Activated CD8-positive, alpha-beta T cell treated with anti-CD3 and anti-CD28 coated beads for 36 hours (primary cell): ENCODE measurements at regions of chr13 and their contacts with region 1.

Region 1: DNA sequence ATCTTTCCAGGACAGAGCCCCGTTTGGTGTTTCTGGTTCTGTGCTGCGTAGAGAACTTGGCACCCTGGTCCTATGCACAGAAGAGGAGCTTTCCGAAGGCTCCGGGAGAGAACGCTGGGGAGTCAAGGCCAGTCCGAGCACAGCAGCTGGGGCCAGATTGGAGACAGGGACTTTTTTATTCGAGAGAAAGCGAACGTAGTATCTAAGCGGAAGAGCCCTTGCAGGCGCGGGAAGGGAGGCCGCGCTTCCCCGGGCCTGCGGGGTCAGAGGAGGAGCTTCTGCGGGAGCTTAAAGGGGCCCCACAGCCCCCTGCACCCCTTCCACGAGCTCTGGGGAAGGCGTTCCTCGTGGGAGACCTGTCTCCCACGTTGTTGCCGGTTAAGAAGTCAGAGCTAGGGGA is 48.6 kb upstream of the ARHGEF7 start:
- DNase-seq: no peak
- ATAC-seq: no peak
- H3K4me3 Mint-ChIP-seq: peak overlapping the region; percentile 62
- H3K27ac Mint-ChIP-seq: no peak overlapping the region
- H3K4me1 Mint-ChIP-seq: peaks cover 3% of the 10 kb centered on the region
- H3K27me3 Mint-ChIP-seq: peaks cover 36% of the 10 kb centered on the region
- CTCF ChIP-seq: no peak

Region 2: DNA sequence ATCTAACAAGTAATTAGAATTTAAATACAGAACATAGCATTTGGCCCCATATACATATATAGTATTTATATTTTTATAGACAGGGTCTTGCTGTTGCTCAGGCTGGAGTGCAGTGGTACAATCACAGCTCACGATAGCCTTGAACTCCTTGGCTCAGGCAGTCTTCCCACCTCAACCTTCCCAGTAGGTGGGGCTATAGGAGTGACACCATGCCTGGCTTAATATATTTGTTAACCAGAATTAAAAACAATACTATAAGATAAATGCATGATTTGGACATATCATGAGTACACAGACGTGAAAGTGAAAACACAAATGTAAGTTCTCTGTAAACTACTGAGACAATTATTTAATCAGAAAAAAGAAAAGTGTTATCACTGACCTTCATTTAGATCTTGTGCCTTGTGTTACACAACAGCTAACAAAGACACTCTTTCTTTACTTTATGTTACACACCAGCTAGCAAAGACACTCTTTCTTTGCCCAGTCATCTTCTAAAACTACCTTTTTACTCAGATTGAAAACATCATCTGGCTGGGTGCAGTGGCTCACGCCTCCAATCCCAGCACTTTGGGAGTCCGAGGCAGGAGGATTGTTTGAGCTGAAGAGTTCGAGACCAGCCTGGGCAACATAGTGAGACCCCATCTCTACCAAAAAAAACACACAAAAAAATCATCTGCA is 383.2 kb before region 1 on chr13:
- CTCF ChIA-PET with region 1: no interaction called
- POLR2A ChIA-PET with region 1: no interaction called
- intact Hi-C with region 1: no loop called
- DNase-seq: no peak
- ATAC-seq: no peak
- H3K4me3 Mint-ChIP-seq: no peak overlapping the region
- H3K27ac Mint-ChIP-seq: no peak overlapping the region
- H3K4me1 Mint-ChIP-seq: peaks cover 6% of the 10 kb centered on the region
- H3K27me3 Mint-ChIP-seq: no peaks in the 10 kb centered on the region
- CTCF ChIP-seq: peak; percentile 13

Region 3: GRCh38 chr13:110705826-110706569 is 360.5 kb before region 1 on chr13 and contains the start of gene CARS2:
- CTCF ChIA-PET with region 1: no interaction called
- POLR2A ChIA-PET with region 1: no interaction called
- intact Hi-C with region 1: no loop called
- DNase-seq: peak; percentile 95
- ATAC-seq: peak; percentile 96
- H3K4me3 Mint-ChIP-seq: peak within 1 kb of the TSS; percentile 90
- H3K27ac Mint-ChIP-seq: peak within 1 kb of the TSS; percentile 90
- H3K4me1 Mint-ChIP-seq: peaks cover 30% of the 10 kb centered on the region
- H3K27me3 Mint-ChIP-seq: no peaks in the 10 kb centered on the region
- CTCF ChIP-seq: no peak
- total RNA-seq, gene CARS2: 60.7 to 63.0 TPM

Region 4: DNA sequence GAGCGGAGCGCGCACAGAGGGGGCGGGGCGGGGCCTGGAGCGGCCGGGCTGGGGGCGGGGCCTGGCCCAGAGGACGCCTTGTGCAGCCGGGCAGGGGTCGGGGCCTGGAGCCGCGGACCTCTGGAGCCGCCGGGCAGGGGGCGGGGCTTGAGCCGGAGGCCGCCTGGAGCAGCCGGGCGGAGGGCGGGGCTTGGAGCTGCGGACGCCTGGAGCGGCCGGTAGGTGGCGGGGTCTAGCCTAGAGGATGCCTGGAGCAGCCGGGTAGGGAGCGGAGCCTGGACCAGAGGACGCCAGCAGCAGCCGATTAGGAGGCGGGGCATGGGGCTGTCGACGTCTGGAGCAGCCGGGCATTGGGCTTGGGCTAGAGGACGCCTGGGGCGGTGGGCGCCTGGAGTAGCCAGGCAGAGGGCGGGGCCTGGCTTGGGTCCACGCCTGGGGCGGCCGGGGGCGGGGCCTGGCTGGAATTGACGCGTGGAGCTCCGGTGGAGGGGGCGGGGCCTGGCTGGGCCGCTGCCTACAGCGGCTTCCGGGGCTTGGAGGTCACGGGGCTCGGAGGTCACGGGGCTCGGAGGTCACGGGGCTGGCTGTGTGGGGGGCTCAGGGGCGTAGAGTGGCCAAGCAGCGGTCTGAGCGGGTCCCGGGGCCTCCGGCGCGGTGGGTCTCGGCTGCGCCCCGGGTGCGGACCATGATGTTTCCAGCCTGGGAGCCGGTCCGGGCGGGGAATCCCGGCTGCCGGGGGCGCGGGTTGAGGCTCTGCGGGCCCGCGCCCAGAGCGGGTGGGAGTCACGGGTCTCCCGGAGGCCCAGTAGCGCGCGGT is 151.3 kb before region 1 on chr13 and contains the start of gene ANKRD10:
- CTCF ChIA-PET with region 1: interaction called, 14 read pairs
- POLR2A ChIA-PET with region 1: no interaction called
- intact Hi-C with region 1: no loop called
- DNase-seq: peak; percentile 97
- ATAC-seq: peak; percentile 86
- H3K4me3 Mint-ChIP-seq: peak within 1 kb of the TSS; percentile 90
- H3K27ac Mint-ChIP-seq: peak within 1 kb of the TSS; percentile 94
- H3K4me1 Mint-ChIP-seq: peaks cover 35% of the 10 kb centered on the region
- H3K27me3 Mint-ChIP-seq: no peaks in the 10 kb centered on the region
- CTCF ChIP-seq: peak; percentile 72
- total RNA-seq, gene ANKRD10: 81.6 to 86.1 TPM

Region 5: DNA sequence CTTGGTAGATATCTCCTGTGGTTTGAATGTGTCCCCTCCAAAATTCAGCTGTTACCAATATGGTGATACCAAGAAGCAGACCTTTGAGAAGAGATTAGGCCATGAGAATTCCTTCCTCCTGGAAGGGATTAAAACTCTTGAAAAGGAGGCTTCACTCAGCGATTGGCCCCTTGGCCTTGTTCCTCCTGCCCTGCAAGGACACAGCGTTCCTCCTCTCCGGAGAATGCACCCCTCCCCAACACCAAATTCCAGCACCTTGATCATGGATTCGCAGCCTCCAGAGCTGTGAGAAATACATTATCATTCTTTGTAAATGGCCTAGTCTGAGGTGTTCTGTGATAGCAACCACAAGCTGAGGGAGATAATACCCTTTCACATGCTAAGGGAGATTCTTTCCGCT is 14.1 kb after region 1 on chr13:
- CTCF ChIA-PET with region 1: interaction called, 14 read pairs
- POLR2A ChIA-PET with region 1: no interaction called
- intact Hi-C with region 1: no loop called
- DNase-seq: no peak
- ATAC-seq: no peak
- H3K4me3 Mint-ChIP-seq: no peak overlapping the region
- H3K27ac Mint-ChIP-seq: no peak overlapping the region
- H3K4me1 Mint-ChIP-seq: no peaks in the 10 kb centered on the region
- H3K27me3 Mint-ChIP-seq: no peaks in the 10 kb centered on the region
- CTCF ChIP-seq: no peak

Region 6: GRCh38 chr13:111202745-111203144 is 136.2 kb after region 1 on chr13:
- CTCF ChIA-PET with region 1: interaction called, 11 read pairs
- POLR2A ChIA-PET with region 1: no interaction called
- intact Hi-C with region 1: loop called (anchors 10 kb)
- DNase-seq: peak; percentile 51
- ATAC-seq: peak; percentile 77
- H3K4me3 Mint-ChIP-seq: no peak overlapping the region
- H3K27ac Mint-ChIP-seq: peak overlapping the region; percentile 45
- H3K4me1 Mint-ChIP-seq: peaks cover 57% of the 10 kb centered on the region
- H3K27me3 Mint-ChIP-seq: no peaks in the 10 kb centered on the region
- CTCF ChIP-seq: no peak

Region 7: GRCh38 chr13:111216166-111216960 is 149.8 kb after region 1 on chr13:
- CTCF ChIA-PET with region 1: interaction called, 45 read pairs
- POLR2A ChIA-PET with region 1: no interaction called
- intact Hi-C with region 1: no loop called
- DNase-seq: peak; percentile 71
- ATAC-seq: peak; percentile 87
- H3K4me3 Mint-ChIP-seq: no peak overlapping the region
- H3K27ac Mint-ChIP-seq: peak overlapping the region; percentile 16
- H3K4me1 Mint-ChIP-seq: peaks cover 20% of the 10 kb centered on the region
- H3K27me3 Mint-ChIP-seq: no peaks in the 10 kb centered on the region
- CTCF ChIP-seq: peak; percentile 52

Region 8: GRCh38 chr13:111429064-111429558 is 362.6 kb after region 1 on chr13:
- CTCF ChIA-PET with region 1: interaction called, 10 read pairs
- POLR2A ChIA-PET with region 1: no interaction called
- intact Hi-C with region 1: no loop called
- DNase-seq: peak; percentile 76
- ATAC-seq: peak; percentile 94
- H3K4me3 Mint-ChIP-seq: no peak overlapping the region
- H3K27ac Mint-ChIP-seq: no peak overlapping the region
- H3K4me1 Mint-ChIP-seq: no peaks in the 10 kb centered on the region
- H3K27me3 Mint-ChIP-seq: peaks cover 2% of the 10 kb centered on the region
- CTCF ChIP-seq: peak; percentile 62